Activated naive CD4-positive, alpha-beta T cell treated with anti-CD3 and anti-CD28 coated beads for 36 hours (primary cell): ENCODE measurements at regions of chr1 and their contacts with region 1.

Region 1: DNA sequence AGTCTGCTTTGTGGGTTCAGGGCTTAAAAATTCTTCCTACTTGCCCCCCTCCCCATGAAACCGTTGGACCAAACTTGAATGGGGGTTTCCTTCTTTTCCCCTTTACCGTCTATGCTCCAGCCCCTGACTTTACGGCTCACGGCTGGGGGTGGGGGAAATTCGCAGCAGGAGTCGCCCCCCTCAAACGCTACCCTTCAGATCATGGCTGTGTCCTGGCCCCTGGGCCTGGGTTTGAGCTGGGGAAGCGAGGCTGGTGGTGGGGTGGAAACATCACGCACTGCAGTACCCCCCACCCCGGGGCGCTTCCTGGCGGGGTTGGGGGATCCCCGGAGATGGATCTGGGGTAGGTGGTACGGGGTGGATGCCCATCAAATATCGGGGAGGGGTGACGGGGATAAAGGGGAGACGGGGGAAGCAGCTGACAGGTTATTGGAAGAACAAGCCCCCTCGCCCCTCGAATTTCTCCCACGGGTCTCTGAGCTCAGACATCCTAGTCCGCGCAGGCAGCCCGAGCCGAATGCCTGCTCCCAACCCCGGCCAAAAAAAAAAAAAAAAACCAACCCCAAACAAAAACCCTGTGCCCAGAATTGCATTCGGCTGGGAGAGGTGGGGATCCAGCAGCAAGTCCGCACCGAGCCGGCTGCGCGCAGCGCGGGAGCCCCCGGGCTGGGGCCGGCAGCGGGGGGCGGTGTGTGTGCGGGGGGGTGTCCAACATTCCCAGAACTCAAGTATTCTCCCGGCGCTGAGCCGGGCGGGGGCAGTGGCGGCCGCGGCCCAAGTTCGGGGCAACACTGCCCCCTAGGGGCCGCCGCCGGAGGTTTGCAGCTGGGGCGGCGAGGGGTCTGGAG is 59.0 kb upstream of the ACOT11 start:
- DNase-seq: peak; percentile 61
- H3K4me3 Mint-ChIP-seq: peak overlapping the region; percentile 76
- H3K27ac Mint-ChIP-seq: peak overlapping the region; percentile 63
- H3K4me1 Mint-ChIP-seq: peaks cover 37% of the 10 kb centered on the region
- H3K27me3 Mint-ChIP-seq: peaks cover 2% of the 10 kb centered on the region

Region 2: GRCh38 chr1:54052934-54053744 is 435.9 kb before region 1 on chr1 and contains the starts of genes TCEANC2 and TMEM59:
- CTCF ChIA-PET with region 1: no interaction called
- intact Hi-C with region 1: loop called (anchors 1 kb)
- DNase-seq: peak; percentile 99
- H3K4me3 Mint-ChIP-seq: no peak within 1 kb of the TSS
- H3K27ac Mint-ChIP-seq: no peak within 1 kb of the TSS
- H3K4me1 Mint-ChIP-seq: peaks cover 37% of the 10 kb centered on the region
- H3K27me3 Mint-ChIP-seq: no peaks in the 10 kb centered on the region
- total RNA-seq, gene TCEANC2: 13.0 TPM
- total RNA-seq, gene TMEM59: 140 to 142 TPM

Region 3: GRCh38 chr1:54180701-54181360 is 308.2 kb before region 1 on chr1:
- CTCF ChIA-PET with region 1: interaction called, 11 read pairs
- intact Hi-C with region 1: loop called (anchors 1 kb)
- DNase-seq: no peak
- H3K4me3 Mint-ChIP-seq: no peak overlapping the region
- H3K27ac Mint-ChIP-seq: no peak overlapping the region
- H3K4me1 Mint-ChIP-seq: no peaks in the 10 kb centered on the region
- H3K27me3 Mint-ChIP-seq: no peaks in the 10 kb centered on the region

Region 4: DNA sequence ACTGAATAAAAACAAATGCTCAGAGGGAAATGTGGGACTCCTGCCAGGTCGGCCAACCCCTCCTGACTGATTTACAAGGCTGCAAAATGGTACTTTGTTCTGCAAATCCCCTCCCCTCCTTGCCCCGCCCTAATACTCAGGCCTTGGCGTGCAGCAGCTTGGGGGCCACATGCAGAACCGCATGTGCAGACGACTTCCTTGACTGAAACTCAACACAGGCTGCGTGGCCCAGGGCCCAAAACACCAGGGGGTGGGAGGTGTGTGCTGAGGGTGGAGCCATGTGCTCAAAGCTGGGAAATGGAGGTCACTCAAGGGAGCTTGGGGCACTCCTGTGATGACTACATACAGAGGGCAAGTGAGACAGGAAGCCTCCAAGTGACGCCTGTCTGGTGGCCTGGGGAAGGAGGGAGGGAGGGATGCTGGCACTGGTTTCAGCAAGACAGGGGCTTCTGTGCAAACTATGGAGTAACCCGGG is 201.8 kb before region 1 on chr1:
- CTCF ChIA-PET with region 1: interaction called, 5 read pairs
- intact Hi-C with region 1: loop called (anchors 1 kb)
- DNase-seq: peak; percentile 92
- H3K4me3 Mint-ChIP-seq: peak overlapping the region; percentile 69
- H3K27ac Mint-ChIP-seq: peak overlapping the region; percentile 86
- H3K4me1 Mint-ChIP-seq: peaks cover 92% of the 10 kb centered on the region
- H3K27me3 Mint-ChIP-seq: no peaks in the 10 kb centered on the region

Region 5: DNA sequence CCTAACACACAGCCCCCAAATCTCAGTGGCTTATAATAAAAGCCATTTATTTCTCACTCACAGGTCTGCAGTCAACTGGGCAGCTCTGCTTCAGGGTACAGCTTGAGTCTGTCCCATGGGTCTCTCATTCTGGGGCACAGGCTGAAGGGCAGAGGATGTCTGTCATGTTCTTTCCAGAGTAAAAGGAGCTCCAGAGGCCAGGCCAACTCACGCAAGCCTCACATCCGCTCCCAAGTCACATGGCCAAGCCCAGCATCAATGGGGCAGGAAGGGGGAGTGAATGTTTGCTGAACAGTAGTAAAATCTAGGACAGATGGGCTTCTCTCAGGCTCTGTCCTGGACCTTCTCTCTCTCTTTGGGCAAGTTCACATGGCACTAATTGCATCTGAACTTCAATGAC is 75.7 kb before region 1 on chr1:
- CTCF ChIA-PET with region 1: interaction called, 18 read pairs
- intact Hi-C with region 1: no loop called
- DNase-seq: peak; percentile 76
- H3K4me3 Mint-ChIP-seq: peak overlapping the region; percentile 64
- H3K27ac Mint-ChIP-seq: peak overlapping the region; percentile 75
- H3K4me1 Mint-ChIP-seq: peaks cover 31% of the 10 kb centered on the region
- H3K27me3 Mint-ChIP-seq: no peaks in the 10 kb centered on the region